ENCODE measurements at regions of chr2 and their contacts with region 1.

Region 1: GRCh38 chr2:37414470-37414949 is 70.1 kb downstream of the QPCT start:
- DNase-seq: peak; percentile 70
- CTCF ChIP-seq: peak; percentile 88

Region 2: GRCh38 chr2:37389989-37390765 is 24.3 kb before region 1 on chr2:
- CTCF ChIA-PET with region 1: interaction called, 45 read pairs
- POLR2A ChIA-PET with region 1: no interaction called
- DNase-seq: peak; percentile 83
- CTCF ChIP-seq: no peak

Region 3: GRCh38 chr2:37427241-37427640 is 12.7 kb after region 1 on chr2:
- CTCF ChIA-PET with region 1: interaction called, 30 read pairs
- POLR2A ChIA-PET with region 1: no interaction called
- DNase-seq: no peak
- CTCF ChIP-seq: no peak

Region 4: GRCh38 chr2:37449761-37450296 is 35.3 kb after region 1 on chr2:
- CTCF ChIA-PET with region 1: interaction called, 10 read pairs
- POLR2A ChIA-PET with region 1: interaction called, 5 read pairs
- DNase-seq: no peak
- CTCF ChIP-seq: no peak

Region 5: GRCh38 chr2:37648331-37649011 is 234.0 kb after region 1 on chr2:
- CTCF ChIA-PET with region 1: interaction called, 18 read pairs
- POLR2A ChIA-PET with region 1: no interaction called
- DNase-seq: no peak
- CTCF ChIP-seq: no peak

Region 6: GRCh38 chr2:37832590-37833197 is 418.2 kb after region 1 on chr2:
- CTCF ChIA-PET with region 1: interaction called, 197 read pairs
- POLR2A ChIA-PET with region 1: no interaction called
- DNase-seq: peak; percentile 69
- CTCF ChIP-seq: peak; percentile 91

Region 7: GRCh38 chr2:37877457-37878315 is 463.2 kb after region 1 on chr2:
- CTCF ChIA-PET with region 1: interaction called, 123 read pairs
- POLR2A ChIA-PET with region 1: no interaction called
- DNase-seq: peak; percentile 50
- CTCF ChIP-seq: peak; percentile 60